A673 (cell line): ENCODE measurements at regions of chrX and their contacts with region 1.

Region 1: DNA sequence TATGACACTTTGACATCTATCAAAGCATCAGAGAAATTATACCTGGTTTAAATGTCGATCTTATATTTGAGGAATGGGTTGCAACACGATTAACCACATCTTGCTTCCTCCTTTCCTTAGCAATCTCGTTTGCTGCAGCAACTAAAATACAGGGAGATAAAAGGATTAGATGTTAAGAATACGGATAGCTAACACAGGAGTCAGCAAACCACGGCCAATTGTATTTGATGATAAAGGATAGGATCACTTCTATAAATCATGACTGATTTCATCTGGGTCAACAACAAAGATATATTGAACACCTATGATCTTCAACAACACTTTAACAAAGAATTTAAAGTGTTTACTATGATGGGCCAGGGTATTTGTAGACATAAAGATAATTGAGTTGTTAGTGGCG is 5.0 kb downstream of the MAP7D3 start:
- DNase-seq: no peak
- H3K4me3 ChIP-seq: no peak overlapping the region
- H3K27ac ChIP-seq: no peak overlapping the region
- H3K4me1 ChIP-seq: no peaks in the 10 kb centered on the region
- H3K27me3 ChIP-seq: no peaks in the 10 kb centered on the region
- CTCF ChIP-seq: no peak

Region 2: DNA sequence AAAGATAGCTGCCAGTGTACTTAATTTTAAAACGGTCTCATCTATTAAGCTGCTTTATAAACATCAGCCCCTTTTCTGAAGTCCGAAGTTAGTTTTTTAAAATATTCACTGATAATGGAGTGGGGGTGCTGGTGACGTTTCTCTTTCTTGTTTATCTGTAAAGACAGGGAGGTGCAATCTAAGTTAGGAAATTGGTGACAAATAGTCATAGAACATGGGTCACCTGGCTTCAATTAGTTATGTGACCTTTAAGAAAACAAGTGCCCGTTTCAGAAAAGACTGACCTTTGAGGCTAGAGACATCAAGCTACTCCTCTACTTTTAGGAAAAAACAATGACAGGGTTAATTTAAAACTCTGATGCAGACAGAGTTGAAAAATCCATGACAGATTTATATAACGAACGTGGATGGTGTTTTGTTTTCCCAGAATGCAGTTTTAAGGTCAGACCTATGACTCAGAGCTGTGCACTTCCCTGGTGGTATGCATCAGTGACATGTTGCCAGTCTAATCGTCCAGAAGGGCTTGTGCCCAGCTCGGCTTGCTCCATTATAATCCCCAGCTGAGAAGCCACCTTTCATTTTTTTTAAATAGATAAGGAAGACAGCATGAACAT is 60.7 kb before region 1 on chrX:
- CTCF ChIA-PET with region 1: no interaction called
- POLR2A ChIA-PET with region 1: no interaction called
- intact Hi-C with region 1: loop called (anchors 10 kb)
- DNase-seq: peak; percentile 32
- H3K4me3 ChIP-seq: no peak overlapping the region
- H3K27ac ChIP-seq: no peak overlapping the region
- H3K4me1 ChIP-seq: peaks cover 32% of the 10 kb centered on the region
- H3K27me3 ChIP-seq: no peaks in the 10 kb centered on the region
- CTCF ChIP-seq: no peak

Region 3: GRCh38 chrX:136626237-136626636 is 380.0 kb after region 1 on chrX:
- CTCF ChIA-PET with region 1: no interaction called
- POLR2A ChIA-PET with region 1: no interaction called
- intact Hi-C with region 1: no loop called
- DNase-seq: no peak
- H3K4me3 ChIP-seq: no peak overlapping the region
- H3K27ac ChIP-seq: no peak overlapping the region
- H3K4me1 ChIP-seq: no peaks in the 10 kb centered on the region
- H3K27me3 ChIP-seq: no peaks in the 10 kb centered on the region
- CTCF ChIP-seq: no peak